A673 (cell line): ENCODE measurements at regions of chr13 and their contacts with region 1.

Region 1: GRCh38 chr13:60329221-60329983 is 67.6 kb upstream of the TDRD3 start:
- DNase-seq: peak; percentile 93
- H3K4me3 ChIP-seq: no peak overlapping the region
- H3K27ac ChIP-seq: peak overlapping the region; percentile 91
- H3K4me1 ChIP-seq: peaks cover 58% of the 10 kb centered on the region
- H3K27me3 ChIP-seq: no peaks in the 10 kb centered on the region
- CTCF ChIP-seq: peak; percentile 84

Region 2: GRCh38 chr13:59391696-59392095 is 937.7 kb before region 1 on chr13:
- CTCF ChIA-PET with region 1: no interaction called
- POLR2A ChIA-PET with region 1: no interaction called
- intact Hi-C with region 1: loop called (anchors 5 kb)
- DNase-seq: peak; percentile 91
- H3K4me3 ChIP-seq: no peak overlapping the region
- H3K27ac ChIP-seq: peak overlapping the region; percentile 58
- H3K4me1 ChIP-seq: peaks cover 23% of the 10 kb centered on the region
- H3K27me3 ChIP-seq: no peaks in the 10 kb centered on the region
- CTCF ChIP-seq: peak; percentile 93

Region 3: DNA sequence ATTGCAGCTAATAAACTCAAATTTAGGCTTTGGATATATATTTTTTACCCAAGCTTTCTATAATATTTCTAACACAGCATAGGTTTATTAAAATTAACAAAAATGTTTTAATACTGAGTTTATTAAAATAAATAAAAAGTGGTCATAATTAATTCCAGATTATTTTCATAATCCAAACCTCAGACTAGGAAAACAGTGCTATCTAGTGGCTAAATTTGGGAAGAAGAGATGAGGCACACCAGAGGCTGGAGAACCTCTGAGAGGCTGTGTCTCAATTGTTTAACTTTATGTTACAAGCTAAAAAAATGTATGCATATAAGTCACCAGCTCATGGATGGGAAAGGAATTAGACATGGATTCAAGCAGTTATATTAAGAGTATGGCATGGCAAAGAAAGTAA is 558.1 kb before region 1 on chr13:
- CTCF ChIA-PET with region 1: interaction called, 3 read pairs
- POLR2A ChIA-PET with region 1: no interaction called
- intact Hi-C with region 1: loop called (anchors 5 kb)
- DNase-seq: peak; percentile 73
- H3K4me3 ChIP-seq: no peak overlapping the region
- H3K27ac ChIP-seq: peak overlapping the region; percentile 70
- H3K4me1 ChIP-seq: peaks cover 83% of the 10 kb centered on the region
- H3K27me3 ChIP-seq: no peaks in the 10 kb centered on the region
- CTCF ChIP-seq: peak; percentile 80

Region 4: DNA sequence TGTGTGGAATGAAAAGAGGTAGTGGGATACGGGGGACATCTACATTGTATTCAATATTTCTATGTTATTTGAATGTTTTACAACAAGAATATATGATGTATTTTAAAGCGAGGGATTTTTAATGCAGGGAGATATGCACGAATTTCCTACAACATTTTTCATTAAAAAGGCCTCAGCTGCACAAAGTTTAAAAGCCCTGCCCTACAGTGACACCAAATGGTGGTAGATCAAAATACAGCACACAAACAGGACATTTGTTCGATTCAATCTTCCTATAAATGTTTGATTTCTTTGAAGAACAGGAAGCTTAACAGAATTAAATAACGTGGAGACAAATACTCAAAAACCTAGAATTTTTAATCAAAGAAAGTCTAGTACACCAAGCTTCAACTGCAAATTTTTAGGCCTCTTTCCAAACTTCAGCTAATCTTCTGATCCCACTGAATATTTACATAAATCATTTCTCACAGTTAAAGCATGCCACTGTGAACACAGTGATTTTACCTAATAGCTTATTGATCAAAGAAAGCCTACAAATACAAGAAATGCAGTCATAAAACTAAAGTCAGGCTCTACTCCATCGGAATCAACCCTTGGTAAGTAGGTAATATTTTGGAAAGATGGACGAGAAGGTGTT is 422.9 kb before region 1 on chr13:
- CTCF ChIA-PET with region 1: no interaction called
- POLR2A ChIA-PET with region 1: no interaction called
- intact Hi-C with region 1: loop called (anchors 5 kb)
- DNase-seq: peak; percentile 75
- H3K4me3 ChIP-seq: no peak overlapping the region
- H3K27ac ChIP-seq: peak overlapping the region; percentile 64
- H3K4me1 ChIP-seq: peaks cover 32% of the 10 kb centered on the region
- H3K27me3 ChIP-seq: no peaks in the 10 kb centered on the region
- CTCF ChIP-seq: peak; percentile 79

Region 5: GRCh38 chr13:60163478-60164233 is 165.7 kb before region 1 on chr13 and contains the start of gene DIAPH3:
- CTCF ChIA-PET with region 1: no interaction called
- POLR2A ChIA-PET with region 1: no interaction called
- intact Hi-C with region 1: loop called (anchors 5 kb)
- DNase-seq: peak; percentile 97
- H3K4me3 ChIP-seq: peak within 1 kb of the TSS; percentile 79
- H3K27ac ChIP-seq: peak within 1 kb of the TSS; percentile 84
- H3K4me1 ChIP-seq: peaks cover 17% of the 10 kb centered on the region
- H3K27me3 ChIP-seq: no peaks in the 10 kb centered on the region
- CTCF ChIP-seq: no peak
- total RNA-seq, gene DIAPH3: 62.3 and 65.7 TPM in 2 replicates